AG04450 (cell line): ENCODE measurements at regions of chr20 and their contacts with region 1.

Region 1: GRCh38 chr20:58236612-58237330 is 8.3 kb upstream of the ANKRD60 start:
- DNase-seq: no peak
- H3K4me3 ChIP-seq: peak overlapping the region; percentile 56
- H3K27ac ChIP-seq: no peak overlapping the region
- H3K27me3 ChIP-seq: no peaks in the 10 kb centered on the region
- CTCF ChIP-seq: peak; percentile 95

Region 2: DNA sequence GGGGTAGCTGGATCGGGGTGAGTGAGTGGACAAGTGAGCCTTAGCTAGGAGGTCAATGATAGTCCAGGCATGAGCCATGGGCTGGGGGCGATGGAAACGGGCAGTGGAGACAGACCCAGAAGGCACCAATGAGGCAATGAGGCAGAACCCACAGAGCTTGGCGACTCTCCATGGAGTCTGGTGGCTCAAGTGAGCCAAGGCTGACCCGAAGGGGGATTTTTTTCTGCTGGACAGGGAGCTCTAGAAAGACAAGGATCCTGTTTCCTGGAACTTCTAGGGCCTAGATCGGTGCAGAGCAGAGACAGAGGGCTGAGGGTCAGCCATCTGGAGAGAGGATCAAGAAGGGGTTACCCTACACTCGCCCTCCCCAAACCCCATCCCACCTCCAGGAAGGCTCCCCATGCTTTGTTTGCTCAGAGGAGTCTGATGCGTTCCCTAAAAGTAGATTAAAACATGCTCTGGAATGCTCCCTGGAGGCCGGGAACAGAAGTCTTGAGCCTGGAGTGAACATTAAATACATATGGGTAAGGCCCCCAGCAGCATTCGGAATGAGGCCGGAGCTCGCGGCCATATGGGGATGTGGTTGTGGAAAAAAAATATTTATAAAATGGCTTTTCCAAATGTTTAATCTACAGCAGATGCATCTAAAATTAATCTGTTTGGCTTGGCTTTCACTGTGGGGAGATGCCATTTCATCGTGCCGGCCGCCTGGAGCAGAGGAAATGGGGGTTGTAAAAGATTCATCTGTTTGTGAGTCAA is 289.2 kb before region 1 on chr20:
- CTCF ChIA-PET with region 1: no interaction called
- POLR2A ChIA-PET with region 1: no interaction called
- DNase-seq: no peak
- H3K4me3 ChIP-seq: no peak overlapping the region
- H3K27ac ChIP-seq: no peak overlapping the region
- H3K27me3 ChIP-seq: no peaks in the 10 kb centered on the region
- CTCF ChIP-seq: no peak

Region 3: GRCh38 chr20:58087193-58087858 is 149.4 kb before region 1 on chr20:
- CTCF ChIA-PET with region 1: no interaction called
- POLR2A ChIA-PET with region 1: no interaction called
- DNase-seq: no peak
- H3K4me3 ChIP-seq: no peak overlapping the region
- H3K27ac ChIP-seq: no peak overlapping the region
- H3K27me3 ChIP-seq: peaks cover 2% of the 10 kb centered on the region
- CTCF ChIP-seq: peak; percentile 77

Region 4: GRCh38 chr20:58224974-58225373 is 11.8 kb before region 1 on chr20:
- CTCF ChIA-PET with region 1: interaction called, 10 read pairs
- POLR2A ChIA-PET with region 1: no interaction called
- DNase-seq: no peak
- H3K4me3 ChIP-seq: no peak overlapping the region
- H3K27ac ChIP-seq: no peak overlapping the region
- H3K27me3 ChIP-seq: peaks cover 49% of the 10 kb centered on the region
- CTCF ChIP-seq: no peak

Region 5: GRCh38 chr20:58256307-58256706 is 19.5 kb after region 1 on chr20:
- CTCF ChIA-PET with region 1: interaction called, 11 read pairs
- POLR2A ChIA-PET with region 1: no interaction called
- DNase-seq: no peak
- H3K4me3 ChIP-seq: no peak overlapping the region
- H3K27ac ChIP-seq: no peak overlapping the region
- H3K27me3 ChIP-seq: no peaks in the 10 kb centered on the region
- CTCF ChIP-seq: no peak

Region 6: DNA sequence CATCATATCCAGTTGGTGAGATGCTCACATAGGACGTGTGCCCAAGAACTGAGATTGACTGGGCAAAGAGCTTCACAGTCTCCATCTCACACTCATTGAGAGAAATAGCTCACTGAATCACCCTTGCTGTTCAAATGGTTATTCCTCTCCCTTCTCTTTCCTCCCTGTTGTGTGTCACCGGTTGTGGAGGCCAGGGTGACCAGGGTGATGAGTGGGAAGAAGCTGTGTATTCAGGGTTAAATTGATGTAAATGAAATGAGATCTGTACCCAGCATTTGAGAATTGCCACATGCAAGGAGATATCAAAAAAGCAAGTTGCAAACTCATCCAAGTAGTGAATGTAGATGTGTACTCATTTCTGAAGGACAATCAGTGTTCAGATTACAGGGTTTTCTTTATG is 115.7 kb after region 1 on chr20:
- CTCF ChIA-PET with region 1: interaction called, 10 read pairs
- POLR2A ChIA-PET with region 1: no interaction called
- DNase-seq: no peak
- H3K4me3 ChIP-seq: no peak overlapping the region
- H3K27ac ChIP-seq: no peak overlapping the region
- H3K27me3 ChIP-seq: no peaks in the 10 kb centered on the region
- CTCF ChIP-seq: no peak

Region 7: GRCh38 chr20:58361481-58362205 is 124.9 kb after region 1 on chr20:
- CTCF ChIA-PET with region 1: interaction called, 38 read pairs
- POLR2A ChIA-PET with region 1: no interaction called
- DNase-seq: no peak
- H3K4me3 ChIP-seq: no peak overlapping the region
- H3K27ac ChIP-seq: no peak overlapping the region
- H3K27me3 ChIP-seq: no peaks in the 10 kb centered on the region
- CTCF ChIP-seq: no peak